ENCODE measurements at regions of chr1 and their contacts with region 1.

Region 1: DNA sequence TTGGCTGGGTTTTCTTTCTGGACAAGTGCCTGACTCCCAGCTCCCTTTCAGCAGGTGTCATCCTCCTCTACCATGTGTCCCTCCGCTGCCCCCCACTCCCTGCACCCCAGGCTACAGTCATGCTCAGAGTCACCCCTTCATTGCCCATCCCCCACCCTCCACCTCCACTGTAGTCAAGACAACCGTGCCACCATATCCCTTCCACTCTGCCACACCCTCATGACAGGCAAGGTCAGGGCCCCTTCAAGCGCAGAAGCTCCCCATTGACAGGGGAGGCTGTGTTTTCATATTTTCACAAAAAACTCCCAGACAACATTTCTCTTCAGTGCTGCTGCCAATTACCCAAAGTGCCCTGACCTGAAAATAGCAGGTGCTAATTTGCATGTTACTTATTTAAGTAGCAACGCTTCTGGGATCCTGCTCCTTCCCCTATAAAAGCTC is 92.1 kb upstream of the IPO9 start:
- DNase-seq: no peak
- ATAC-seq: no peak
- H3K4me3 ChIP-seq: no peak overlapping the region
- H3K4me3 Mint-ChIP-seq: no peak overlapping the region
- H3K27ac ChIP-seq: no peak overlapping the region
- H3K27ac Mint-ChIP-seq: no peak overlapping the region
- H3K4me1 ChIP-seq: peaks cover 0 to 19% of the 10 kb centered on the region in 2 experiments
- H3K4me1 Mint-ChIP-seq: peaks cover 21 to 34% (median 25%) of the 10 kb centered on the region in 3 donors
- H3K27me3 ChIP-seq: peaks cover 0 to 42% of the 10 kb centered on the region in 2 experiments
- H3K27me3 Mint-ChIP-seq: peaks cover 33 to 43% of the 10 kb centered on the region in 2 donors

Region 2: GRCh38 chr1:201709564-201710295 is 27.1 kb before region 1 on chr1:
- CTCF ChIA-PET with region 1: interaction called in 1 of 2 experiments, 3 read pairs
- POLR2A ChIA-PET with region 1: interaction called in 1 of 2 experiments, 11 read pairs
- DNase-seq: peak in 33 of 35 experiments; percentile 7 to 59 (median 40)
- ATAC-seq: peak; percentile 68 to 83 (median 74)
- H3K4me3 ChIP-seq: no peak overlapping the region
- H3K4me3 Mint-ChIP-seq: no peak overlapping the region
- H3K27ac ChIP-seq: no peak overlapping the region
- H3K27ac Mint-ChIP-seq: no peak overlapping the region
- H3K4me1 ChIP-seq: no peaks in the 10 kb centered on the region
- H3K4me1 Mint-ChIP-seq: no peaks in the 10 kb centered on the region
- H3K27me3 ChIP-seq: peaks cover 0 to 20% of the 10 kb centered on the region in 2 experiments
- H3K27me3 Mint-ChIP-seq: peaks cover 5 to 7% of the 10 kb centered on the region in 2 donors

Measured in T-cell (primary cell).